ENCODE measurements at regions of chr1 and their contacts with region 1.

Region 1: DNA sequence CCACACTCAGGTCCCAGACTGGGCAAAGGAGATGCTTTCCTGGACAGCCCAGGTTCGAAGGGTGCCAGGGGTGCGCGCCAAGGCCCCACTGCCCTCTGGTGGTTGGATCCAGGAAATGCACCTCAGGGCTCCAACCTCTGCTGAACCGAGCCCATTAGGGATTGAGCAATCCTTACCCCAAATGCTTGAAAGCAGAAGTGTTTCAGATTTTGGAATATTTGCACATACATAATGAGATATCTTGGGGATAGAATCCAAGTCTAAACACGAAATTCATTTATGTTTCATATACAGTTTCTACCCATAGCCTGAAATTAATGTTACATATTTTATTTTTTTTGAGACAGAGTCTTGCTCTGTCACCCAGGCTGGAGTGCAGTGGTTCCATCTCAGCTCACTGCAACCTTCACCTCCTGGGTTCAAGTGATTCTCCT is 57.4 kb downstream of the SLC9A1 start:
- DNase-seq: peak; percentile 81
- CTCF ChIP-seq: peak; percentile 93

Region 2: DNA sequence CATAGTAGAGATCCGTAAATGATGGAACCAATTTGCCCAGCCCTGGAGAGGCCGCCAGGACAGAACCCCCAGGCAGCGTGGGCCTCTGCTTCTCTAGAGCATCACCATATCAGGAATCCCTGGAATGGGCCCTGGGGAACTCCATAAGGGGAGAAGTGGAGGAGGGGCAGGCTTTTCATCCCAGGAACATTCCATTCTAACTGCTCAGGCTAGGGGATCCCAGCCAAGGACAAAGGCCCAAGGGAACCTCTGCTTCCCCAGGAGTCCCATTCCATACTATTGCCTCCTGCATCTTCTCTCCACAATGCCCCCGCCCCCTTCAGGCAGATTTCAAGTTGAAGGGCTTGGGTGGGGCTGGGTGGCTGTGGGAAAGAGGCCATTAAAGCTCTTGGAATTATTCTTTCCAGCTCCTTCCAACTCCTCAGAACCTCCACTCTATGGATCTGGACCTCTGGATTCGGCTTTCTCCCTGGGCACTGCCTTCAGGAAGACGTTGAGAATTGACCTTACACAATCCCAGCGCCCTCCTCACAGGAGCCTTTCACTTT is 98.0 kb before region 1 on chr1:
- CTCF ChIA-PET with region 1: interaction called, 33 read pairs
- POLR2A ChIA-PET with region 1: no interaction called
- DNase-seq: no peak
- CTCF ChIP-seq: no peak

Region 3: DNA sequence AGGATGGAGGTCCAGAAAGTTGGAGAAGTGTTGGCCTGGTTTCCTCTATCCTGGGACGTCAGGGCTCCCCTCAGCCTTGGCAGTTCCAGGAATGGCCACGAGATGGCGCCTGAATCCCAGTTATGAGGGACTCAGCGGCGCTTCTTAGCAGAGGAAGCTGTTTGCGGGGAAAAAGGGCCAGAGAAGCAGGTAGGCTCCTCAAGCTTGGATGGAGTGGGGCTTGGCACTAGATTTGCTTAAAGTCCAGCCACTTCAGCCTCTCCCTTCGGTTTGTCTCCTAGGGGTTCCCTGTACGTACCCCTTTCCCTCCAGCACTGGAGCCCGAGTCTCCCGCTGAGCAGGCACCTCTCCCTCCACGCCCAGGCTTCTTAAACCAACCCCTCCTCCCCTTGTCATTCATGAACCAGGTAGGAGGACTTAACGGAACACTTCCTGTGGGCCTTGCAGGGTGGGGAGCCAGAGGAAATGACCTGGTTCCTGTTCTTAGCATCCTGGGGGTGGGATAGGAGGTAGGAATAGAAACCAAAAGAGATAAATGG is 52.8 kb before region 1 on chr1:
- CTCF ChIA-PET with region 1: interaction called, 356 read pairs
- POLR2A ChIA-PET with region 1: no interaction called
- DNase-seq: peak; percentile 87
- CTCF ChIP-seq: peak; percentile 99

Region 4: GRCh38 chr1:27057801-27058625 is 39.5 kb before region 1 on chr1:
- CTCF ChIA-PET with region 1: interaction called, 15 read pairs
- POLR2A ChIA-PET with region 1: no interaction called
- DNase-seq: no peak
- CTCF ChIP-seq: no peak

Region 5: DNA sequence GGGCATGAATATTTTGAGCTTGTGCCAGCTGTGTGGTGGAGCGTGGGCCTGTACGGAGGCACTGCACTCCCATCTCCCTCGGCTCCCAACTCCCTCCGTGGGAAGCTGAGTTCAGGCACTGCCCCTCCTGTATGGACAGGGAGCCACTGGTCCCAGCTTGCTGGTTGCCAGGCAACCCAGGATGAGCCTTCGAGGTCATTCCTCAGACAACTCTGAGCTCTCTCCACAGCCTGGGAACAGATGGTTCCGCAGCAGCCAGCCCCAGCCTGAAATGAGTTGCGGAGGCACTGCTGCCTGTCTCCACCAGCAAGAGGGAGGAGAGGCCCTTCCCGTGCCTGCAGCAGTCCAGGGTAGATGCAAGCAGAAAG is 26.5 kb before region 1 on chr1:
- CTCF ChIA-PET with region 1: interaction called, 18 read pairs
- POLR2A ChIA-PET with region 1: no interaction called
- DNase-seq: no peak
- CTCF ChIP-seq: no peak

Region 6: GRCh38 chr1:27111626-27112573 is 14.4 kb after region 1 on chr1:
- CTCF ChIA-PET with region 1: interaction called, 94 read pairs
- POLR2A ChIA-PET with region 1: no interaction called
- DNase-seq: peak; percentile 87
- CTCF ChIP-seq: peak; percentile 52

Region 7: GRCh38 chr1:27284425-27285273 is 187.1 kb after region 1 on chr1:
- CTCF ChIA-PET with region 1: interaction called, 209 read pairs
- POLR2A ChIA-PET with region 1: no interaction called
- DNase-seq: peak; percentile 88
- CTCF ChIP-seq: peak; percentile 87

Measured in GM10248 (cell line).